ENCODE measurements at regions of chr6 and their contacts with region 1.

Region 1: GRCh38 chr6:37314487-37315156 is 39.2 kb upstream of the RNF8 start:
- DNase-seq: peak; percentile 50
- H3K4me3 ChIP-seq: no peak overlapping the region
- H3K27ac ChIP-seq: no peak overlapping the region
- H3K4me1 ChIP-seq: peaks cover 3% of the 10 kb centered on the region
- H3K27me3 ChIP-seq: no peaks in the 10 kb centered on the region
- CTCF ChIP-seq: peak; percentile 64 to 73

Region 2: DNA sequence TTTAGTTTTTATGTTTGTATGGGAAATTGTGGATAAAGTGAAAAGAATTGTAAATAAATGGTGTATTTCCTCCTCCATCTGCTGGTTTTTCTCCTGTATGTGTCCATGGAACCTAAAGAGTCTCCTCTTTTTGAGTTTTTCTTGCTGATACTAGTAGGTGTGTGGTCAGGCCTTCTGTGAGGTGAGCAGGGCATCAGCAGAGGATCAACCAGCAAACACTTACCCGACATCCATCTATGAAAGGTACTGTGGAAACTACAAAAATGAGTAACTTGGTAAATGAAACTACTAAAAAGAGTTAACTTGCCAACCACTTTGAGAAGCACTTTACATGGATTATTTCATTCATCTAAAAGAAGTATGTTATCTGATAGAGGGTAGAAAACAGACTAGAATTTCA is 18.3 kb after region 1 on chr6:
- CTCF ChIA-PET with region 1: interaction called, 39 read pairs
- dilution Hi-C with region 1: no loop called
- in situ Hi-C with region 1: no loop called
- intact Hi-C with region 1: no loop called
- DNase-seq: no peak
- H3K4me3 ChIP-seq: no peak overlapping the region
- H3K27ac ChIP-seq: no peak overlapping the region
- H3K4me1 ChIP-seq: no peaks in the 10 kb centered on the region
- H3K27me3 ChIP-seq: no peaks in the 10 kb centered on the region
- CTCF ChIP-seq: no peak